Right lobe of liver (tissue), 6 donors: ENCODE measurements at regions of chr3 and their contacts with region 1.

Region 1: DNA sequence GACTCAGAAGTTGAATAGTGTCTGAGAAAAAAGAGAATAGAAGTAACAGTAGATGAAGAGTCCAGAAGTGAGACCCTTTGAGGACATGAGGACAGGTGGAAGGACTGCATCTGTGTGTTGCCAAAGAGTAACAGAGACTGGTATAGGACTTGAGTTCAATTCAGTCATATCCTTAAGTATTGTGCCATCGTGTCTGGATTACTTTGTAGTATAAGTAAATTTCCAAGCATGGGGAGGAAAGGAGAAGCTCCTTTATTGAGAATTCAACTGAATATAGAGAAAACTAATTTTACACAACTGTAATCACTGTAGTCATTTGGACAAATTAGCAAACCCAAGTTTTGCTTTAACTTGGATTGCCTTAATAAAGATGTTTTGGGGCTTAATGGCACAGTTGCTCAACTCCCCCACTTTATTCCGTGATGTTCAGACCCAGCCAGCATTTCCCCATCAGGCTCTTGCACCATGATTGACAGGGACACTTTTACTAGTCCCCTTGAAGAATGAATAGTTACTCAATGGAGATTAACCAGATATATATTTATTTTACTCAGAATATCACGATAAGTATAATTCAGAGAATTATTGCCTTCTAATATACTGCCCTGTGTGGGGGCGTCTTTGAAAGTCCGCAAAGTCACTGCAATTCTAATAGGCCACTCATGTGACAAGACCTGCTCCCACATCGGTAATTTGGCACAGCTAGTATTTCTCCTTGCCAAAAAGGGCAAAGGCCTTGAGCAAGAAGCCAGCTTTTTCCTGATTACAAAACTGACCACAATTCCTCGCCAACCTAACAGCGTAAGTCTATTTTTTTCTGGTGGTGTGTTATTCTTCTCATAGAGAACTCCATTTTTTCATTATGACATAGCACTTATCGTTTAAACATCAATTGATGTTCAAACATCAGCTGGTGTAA is 61.3 kb downstream of the PPARG start:
- DNase-seq: peak in 1 of 3 donors; percentile 76
- ATAC-seq: peak; percentile 71 to 86 (median 76)
- H3K4me3 ChIP-seq: peak overlapping the region; percentile 4 to 20 (median 19)
- H3K27ac ChIP-seq: peak overlapping the region in 2 of 3 donors; percentile 51 to 57
- H3K4me1 ChIP-seq: peaks cover 0 to 22% (median 11%) of the 10 kb centered on the region in 4 donors
- H3K27me3 ChIP-seq: no peaks in the 10 kb centered on the region
- CTCF ChIP-seq: no peak
- POLR2A ChIP-seq: no peak

Region 2: GRCh38 chr3:12405432-12406272 is 55.5 kb after region 1 on chr3:
- intact Hi-C with region 1: loop called (anchors 5 to 10 kb)
- DNase-seq: peak; percentile 95 to 97 (median 95)
- ATAC-seq: peak; percentile 77 to 91 (median 82)
- H3K4me3 ChIP-seq: peak overlapping the region in 2 of 3 donors; percentile 23 to 42
- H3K27ac ChIP-seq: peak overlapping the region; percentile 42 to 73 (median 53)
- H3K4me1 ChIP-seq: peaks cover 0 to 47% (median 15%) of the 10 kb centered on the region in 4 donors
- H3K27me3 ChIP-seq: no peaks in the 10 kb centered on the region
- CTCF ChIP-seq: no peak
- POLR2A ChIP-seq: peak; percentile 75

Region 3: DNA sequence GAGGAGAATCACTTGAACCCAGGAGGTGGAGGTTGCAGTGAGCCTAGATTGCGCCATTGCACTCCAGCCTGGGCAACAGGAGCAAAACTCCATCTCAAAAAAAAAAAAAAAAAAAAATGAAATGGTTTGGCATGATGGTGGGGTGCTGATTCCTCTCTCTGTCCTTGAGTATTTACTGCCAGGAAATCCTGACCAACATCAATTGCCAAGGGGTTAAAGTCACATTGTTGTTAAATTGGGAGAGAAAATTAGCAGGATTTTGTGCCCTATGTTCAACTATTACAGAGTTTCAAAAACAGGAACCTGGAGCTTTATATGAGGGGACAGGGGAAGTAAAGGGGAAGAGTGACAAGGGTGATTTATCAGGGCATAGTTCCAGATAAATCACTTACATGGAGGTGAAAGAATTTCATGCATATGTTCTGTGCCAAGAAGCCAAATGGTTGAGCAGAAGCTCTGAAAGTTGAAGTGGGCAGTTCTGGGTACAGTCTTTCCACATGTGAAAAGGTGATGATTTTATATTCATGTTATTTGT is 63.6 kb after region 1 on chr3:
- intact Hi-C with region 1: loop called (anchors 5 to 10 kb)
- DNase-seq: no peak
- ATAC-seq: peak in 3 of 4 donors; percentile 4 to 11 (median 4)
- H3K4me3 ChIP-seq: no peak overlapping the region
- H3K27ac ChIP-seq: peak overlapping the region in 1 of 3 donors; percentile 25
- H3K4me1 ChIP-seq: peaks cover 0 to 52% (median 7%) of the 10 kb centered on the region in 4 donors
- H3K27me3 ChIP-seq: no peaks in the 10 kb centered on the region
- CTCF ChIP-seq: no peak
- POLR2A ChIP-seq: no peak

Region 4: DNA sequence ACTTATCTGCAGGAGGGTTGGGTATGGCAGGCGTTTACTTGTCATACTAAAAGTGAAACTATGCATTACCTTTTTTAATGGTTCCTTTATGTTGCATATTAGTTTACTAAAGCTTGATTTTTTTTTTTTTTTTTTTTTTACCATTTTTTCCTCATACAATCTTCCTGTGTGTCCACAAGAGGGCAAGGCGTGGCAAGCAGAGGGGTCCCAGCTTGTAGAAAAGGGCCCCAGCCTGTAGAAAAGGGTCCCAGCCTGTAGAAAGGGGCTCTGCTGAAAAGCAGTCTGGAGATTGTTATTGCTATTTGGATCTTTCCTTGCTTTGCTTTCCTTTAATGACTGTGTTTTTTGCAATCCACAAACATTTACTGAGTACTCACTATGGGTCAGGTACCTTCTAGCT is 228.6 kb after region 1 on chr3:
- intact Hi-C with region 1: no loop called
- DNase-seq: no peak
- ATAC-seq: no peak
- H3K4me3 ChIP-seq: no peak overlapping the region
- H3K27ac ChIP-seq: no peak overlapping the region
- H3K4me1 ChIP-seq: peaks cover 0 to 11% (median 5%) of the 10 kb centered on the region in 4 donors
- H3K27me3 ChIP-seq: no peaks in the 10 kb centered on the region
- CTCF ChIP-seq: no peak
- POLR2A ChIP-seq: no peak